Activated CD4-positive, alpha-beta memory T cell treated with anti-CD3 and anti-CD28 coated beads for 36 hours (primary cell): ENCODE measurements at regions of chr13 and their contacts with region 1.

Region 1: GRCh38 chr13:71879129-71879535 is 12.1 kb upstream of the DACH1 start:
- DNase-seq: no peak
- H3K4me3 Mint-ChIP-seq: no peak overlapping the region
- H3K27ac Mint-ChIP-seq: no peak overlapping the region
- H3K4me1 Mint-ChIP-seq: peaks cover 2% of the 10 kb centered on the region
- H3K27me3 Mint-ChIP-seq: peaks cover 5% of the 10 kb centered on the region

Region 2: GRCh38 chr13:71320452-71320851 is 558.7 kb before region 1 on chr13:
- CTCF ChIA-PET with region 1: interaction called, 3 read pairs
- POLR2A ChIA-PET with region 1: no interaction called
- intact Hi-C with region 1: loop called (anchors 1 kb)
- DNase-seq: no peak
- H3K4me3 Mint-ChIP-seq: no peak overlapping the region
- H3K27ac Mint-ChIP-seq: no peak overlapping the region
- H3K4me1 Mint-ChIP-seq: no peaks in the 10 kb centered on the region
- H3K27me3 Mint-ChIP-seq: peaks cover 6% of the 10 kb centered on the region

Region 3: DNA sequence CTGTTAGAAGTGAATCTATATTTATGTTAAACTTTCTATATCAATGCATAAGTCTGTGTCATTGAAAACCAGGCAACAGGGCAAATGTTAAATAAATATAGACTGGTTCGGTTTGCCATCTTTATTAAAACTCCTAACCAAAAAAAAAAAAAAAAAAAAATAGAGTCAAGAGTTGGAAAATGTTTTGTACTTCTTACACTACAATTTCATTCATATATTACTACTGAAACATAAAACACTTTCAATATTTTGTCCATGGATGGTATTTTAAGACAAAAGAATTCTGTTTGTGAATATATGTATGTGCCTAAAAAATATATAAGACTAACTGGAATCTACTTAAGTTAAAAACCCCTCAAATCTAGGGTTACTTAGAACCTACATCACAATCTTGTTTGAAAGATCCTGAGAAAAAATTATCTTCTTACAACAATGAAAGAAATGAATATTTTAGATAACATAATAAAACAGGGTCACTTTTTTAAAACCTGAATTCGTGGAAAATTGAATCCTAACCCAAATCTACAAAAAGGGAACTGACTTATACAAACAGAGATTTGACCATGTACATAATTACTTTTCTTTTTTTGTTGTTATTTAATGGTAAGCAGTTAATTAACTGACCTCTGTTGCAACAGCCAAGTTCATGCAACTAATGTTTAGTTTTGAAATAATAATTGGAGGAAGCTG is 17.2 kb before region 1 on chr13:
- CTCF ChIA-PET with region 1: no interaction called
- POLR2A ChIA-PET with region 1: no interaction called
- intact Hi-C with region 1: no loop called
- DNase-seq: no peak
- H3K4me3 Mint-ChIP-seq: no peak overlapping the region
- H3K27ac Mint-ChIP-seq: no peak overlapping the region
- H3K4me1 Mint-ChIP-seq: peaks cover 12% of the 10 kb centered on the region
- H3K27me3 Mint-ChIP-seq: peaks cover 24% of the 10 kb centered on the region